Caco-2 (cell line): ENCODE measurements at regions of chr3 and their contacts with region 1.

Region 1: GRCh38 chr3:112013058-112013783 is 14.5 kb downstream of the TAGLN3 start:
- DNase-seq: peak; percentile 57 to 66
- H3K4me3 ChIP-seq: no peak overlapping the region
- H3K4me3 Mint-ChIP-seq: no peak overlapping the region
- H3K27ac Mint-ChIP-seq: no peak overlapping the region
- H3K4me1 ChIP-seq: 0 out of 2 replicates have a peak, but pooled peaks cover 6% of the 10 kb centered on the region
- H3K4me1 Mint-ChIP-seq: no peaks in the 10 kb centered on the region
- H3K27me3 ChIP-seq: no peaks in the 10 kb centered on the region
- H3K27me3 Mint-ChIP-seq: no peaks in the 10 kb centered on the region
- CTCF ChIP-seq: peak; percentile 32 to 67

Region 2: DNA sequence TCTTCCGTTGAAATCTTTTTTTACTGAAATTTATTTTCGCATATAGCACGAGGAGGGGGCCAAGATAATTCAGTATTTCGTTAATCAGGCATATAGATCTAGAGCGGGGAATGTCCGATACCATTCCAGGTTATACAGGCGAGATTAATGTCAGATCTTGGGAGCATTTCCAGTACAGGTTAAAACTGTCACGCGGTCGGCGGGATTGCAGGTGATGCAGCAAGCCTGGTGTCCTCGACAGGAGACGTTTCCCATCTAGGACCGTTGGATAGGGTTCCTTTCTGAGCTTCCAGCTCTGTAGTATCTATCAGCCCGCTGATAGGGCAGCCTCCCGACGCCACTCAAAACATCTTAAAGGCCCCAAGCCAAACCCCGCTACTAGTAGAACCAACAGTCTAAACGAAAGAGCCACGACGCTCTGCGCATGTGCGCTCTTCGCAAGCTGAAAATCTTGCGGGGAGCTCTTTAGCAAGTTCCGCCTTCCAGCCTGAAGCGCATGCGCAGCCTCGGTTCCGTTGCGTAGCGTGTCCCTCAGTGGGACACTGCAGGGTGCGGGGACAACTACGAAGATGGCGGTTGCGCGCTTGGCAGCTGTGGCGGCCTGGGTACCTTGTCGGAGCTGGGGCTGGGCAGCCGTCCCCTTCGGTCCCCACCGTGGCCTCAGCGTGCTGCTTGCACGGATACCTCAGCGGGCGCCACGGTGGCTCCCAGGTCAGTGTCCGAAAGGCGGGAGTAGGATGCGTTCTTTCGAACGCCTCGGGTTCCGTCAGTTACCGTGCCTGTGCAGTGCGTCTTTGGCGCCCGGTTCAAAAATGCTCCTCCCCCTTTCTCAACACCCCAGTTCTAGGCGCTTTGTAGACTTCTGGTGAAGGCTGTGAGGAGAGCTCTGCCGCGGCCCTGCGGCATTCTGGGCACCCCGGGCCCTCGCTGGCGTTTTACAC is 34.5 kb before region 1 on chr3 and contains the start of gene ABHD10:
- CTCF ChIA-PET with region 1: interaction called, 25 read pairs
- POLR2A ChIA-PET with region 1: no interaction called
- intact Hi-C with region 1: no loop called
- DNase-seq: peak; percentile 93 to 96
- H3K4me3 ChIP-seq: peak within 1 kb of the TSS; percentile 79
- H3K4me3 Mint-ChIP-seq: peak within 1 kb of the TSS; percentile 84
- H3K27ac Mint-ChIP-seq: peak within 1 kb of the TSS; percentile 88
- H3K4me1 ChIP-seq: no peaks in the 10 kb centered on the region; the same call in 1 of the 2 replicates
- H3K4me1 Mint-ChIP-seq: peaks cover 7% of the 10 kb centered on the region
- H3K27me3 ChIP-seq: no peaks in the 10 kb centered on the region
- H3K27me3 Mint-ChIP-seq: no peaks in the 10 kb centered on the region
- CTCF ChIP-seq: no peak
- total RNA-seq, gene ABHD10: 37.0 and 41.8 TPM in 2 replicates

Region 3: DNA sequence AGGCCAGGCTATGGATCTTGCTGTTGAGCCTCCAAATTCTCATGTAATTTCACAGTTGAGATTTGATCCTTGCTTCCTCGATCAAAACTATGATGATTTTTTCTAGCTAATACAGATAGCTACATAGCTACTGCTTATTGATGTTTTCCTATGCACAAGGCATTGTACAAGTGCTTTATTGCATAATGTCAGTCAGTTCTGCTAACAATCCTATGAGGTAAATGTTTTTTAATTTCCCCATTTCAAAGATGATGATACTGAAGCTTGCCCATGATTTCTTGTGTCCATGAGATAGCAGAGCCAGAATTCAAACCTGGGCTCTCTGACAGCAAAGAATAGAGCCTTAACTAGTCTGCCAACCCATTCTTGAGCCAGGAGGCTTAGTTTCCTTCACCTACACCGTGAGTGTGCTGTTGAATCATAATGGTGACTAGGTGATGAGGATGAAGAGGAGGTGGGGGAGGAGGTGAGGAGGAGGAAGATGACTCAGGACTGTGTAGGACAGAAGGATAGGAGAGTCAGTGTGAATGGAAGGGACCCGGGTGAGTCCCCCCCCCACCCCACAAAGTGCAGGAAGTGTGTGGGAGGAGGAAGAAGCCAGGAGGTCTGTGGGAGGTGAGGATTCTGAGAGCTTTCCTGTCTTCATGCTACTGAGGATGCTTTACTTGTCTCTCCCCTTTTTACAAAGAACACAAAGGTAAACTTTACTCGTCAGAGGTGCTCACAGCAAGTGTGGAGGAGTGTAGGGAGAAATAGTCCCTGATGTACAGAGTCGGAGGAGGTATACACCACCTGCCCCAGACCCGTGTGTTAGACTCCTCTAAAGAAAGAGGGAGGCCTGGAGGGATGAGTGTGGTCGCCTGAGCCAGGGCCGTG is 10.9 kb before region 1 on chr3:
- CTCF ChIA-PET with region 1: interaction called, 16 read pairs
- POLR2A ChIA-PET with region 1: no interaction called
- intact Hi-C with region 1: no loop called
- DNase-seq: no peak
- H3K4me3 ChIP-seq: no peak overlapping the region
- H3K4me3 Mint-ChIP-seq: no peak overlapping the region
- H3K27ac Mint-ChIP-seq: no peak overlapping the region
- H3K4me1 ChIP-seq: peaks cover 9% of the 10 kb centered on the region
- H3K4me1 Mint-ChIP-seq: peaks cover 31% of the 10 kb centered on the region
- H3K27me3 ChIP-seq: no peaks in the 10 kb centered on the region
- H3K27me3 Mint-ChIP-seq: no peaks in the 10 kb centered on the region
- CTCF ChIP-seq: no peak

Region 4: GRCh38 chr3:112043603-112044201 is 30.5 kb after region 1 on chr3:
- CTCF ChIA-PET with region 1: interaction called, 20 read pairs
- POLR2A ChIA-PET with region 1: no interaction called
- intact Hi-C with region 1: no loop called
- DNase-seq: peak; percentile 66 to 71
- H3K4me3 ChIP-seq: no peak overlapping the region
- H3K4me3 Mint-ChIP-seq: no peak overlapping the region
- H3K27ac Mint-ChIP-seq: no peak overlapping the region
- H3K4me1 ChIP-seq: peaks cover 9% of the 10 kb centered on the region; the same call in 1 of the 2 replicates
- H3K4me1 Mint-ChIP-seq: peaks cover 6% of the 10 kb centered on the region
- H3K27me3 ChIP-seq: no peaks in the 10 kb centered on the region
- H3K27me3 Mint-ChIP-seq: no peaks in the 10 kb centered on the region
- CTCF ChIP-seq: peak; percentile 82 to 88

Region 5: DNA sequence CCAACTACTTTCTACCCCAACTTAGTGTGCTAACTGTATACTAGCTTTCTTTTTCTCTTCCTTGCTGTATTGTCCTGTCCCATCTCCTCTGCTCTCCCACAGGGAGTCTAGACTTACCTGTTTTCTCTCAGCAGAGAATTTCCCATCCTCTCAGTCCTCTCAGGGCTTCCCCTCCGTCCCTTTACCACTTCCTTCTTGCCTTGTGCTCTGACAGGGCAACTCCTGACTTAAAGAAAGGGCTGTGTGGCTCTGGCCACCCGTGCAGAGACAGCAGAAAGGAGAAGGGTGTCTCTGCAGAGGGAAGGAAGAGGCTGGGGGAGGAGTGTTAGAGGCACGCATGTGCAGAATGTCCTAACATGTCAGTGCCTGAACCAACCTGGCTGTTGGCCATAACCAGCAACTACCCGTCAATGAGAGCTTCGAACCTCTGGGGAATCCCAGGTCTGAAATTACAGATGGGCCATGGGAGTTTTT is 119.8 kb after region 1 on chr3 and contains the start of gene GCSAM:
- CTCF ChIA-PET with region 1: no interaction called
- POLR2A ChIA-PET with region 1: no interaction called
- intact Hi-C with region 1: no loop called
- DNase-seq: no peak
- H3K4me3 ChIP-seq: no peak within 1 kb of the TSS
- H3K4me3 Mint-ChIP-seq: no peak within 1 kb of the TSS
- H3K27ac Mint-ChIP-seq: no peak within 1 kb of the TSS
- H3K4me1 ChIP-seq: peaks cover 22% of the 10 kb centered on the region
- H3K4me1 Mint-ChIP-seq: peaks cover 16% of the 10 kb centered on the region
- H3K27me3 ChIP-seq: no peaks in the 10 kb centered on the region
- H3K27me3 Mint-ChIP-seq: no peaks in the 10 kb centered on the region
- CTCF ChIP-seq: no peak
- total RNA-seq, gene GCSAM: not detected in 2 replicates